AG04450 (cell line): ENCODE measurements at regions of chr3 and their contacts with region 1.

Region 1: DNA sequence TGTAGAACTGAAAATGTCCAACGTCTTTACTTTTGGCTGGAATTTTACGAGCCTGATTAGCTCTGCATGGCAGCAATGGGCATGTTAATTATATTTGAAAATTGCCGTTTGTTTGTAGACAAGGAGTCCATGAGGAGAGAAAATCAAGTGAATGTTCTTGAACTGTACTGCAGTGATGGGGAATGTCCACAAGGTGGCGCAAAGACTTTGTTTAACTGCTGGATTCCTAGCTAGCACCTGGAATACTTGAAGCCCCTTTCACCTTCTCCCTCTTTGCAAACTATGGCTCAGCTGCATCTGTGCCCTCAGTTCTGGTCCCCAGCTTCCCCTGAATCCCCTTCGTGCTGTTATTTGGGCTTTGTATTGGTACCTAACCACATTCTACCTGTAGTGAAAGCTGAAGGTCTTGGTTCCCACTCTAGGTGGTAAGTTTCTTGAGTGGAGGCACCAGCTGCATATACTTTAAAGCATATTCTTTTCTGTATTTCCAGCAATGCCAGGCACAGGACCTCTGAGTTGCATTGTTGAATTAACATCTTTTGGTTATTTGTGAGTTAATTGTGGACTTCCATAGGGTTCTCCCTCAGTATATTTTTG is 25.3 kb downstream of the EXOG start:
- DNase-seq: peak; percentile 49
- H3K4me3 ChIP-seq: no peak overlapping the region
- H3K27ac ChIP-seq: no peak overlapping the region
- H3K27me3 ChIP-seq: no peaks in the 10 kb centered on the region
- CTCF ChIP-seq: peak; percentile 88

Region 2: GRCh38 chr3:38127611-38128302 is 393.7 kb before region 1 on chr3:
- CTCF ChIA-PET with region 1: no interaction called
- POLR2A ChIA-PET with region 1: no interaction called
- DNase-seq: no peak
- H3K4me3 ChIP-seq: no peak overlapping the region
- H3K27ac ChIP-seq: no peak overlapping the region
- H3K27me3 ChIP-seq: no peaks in the 10 kb centered on the region
- CTCF ChIP-seq: no peak

Region 3: DNA sequence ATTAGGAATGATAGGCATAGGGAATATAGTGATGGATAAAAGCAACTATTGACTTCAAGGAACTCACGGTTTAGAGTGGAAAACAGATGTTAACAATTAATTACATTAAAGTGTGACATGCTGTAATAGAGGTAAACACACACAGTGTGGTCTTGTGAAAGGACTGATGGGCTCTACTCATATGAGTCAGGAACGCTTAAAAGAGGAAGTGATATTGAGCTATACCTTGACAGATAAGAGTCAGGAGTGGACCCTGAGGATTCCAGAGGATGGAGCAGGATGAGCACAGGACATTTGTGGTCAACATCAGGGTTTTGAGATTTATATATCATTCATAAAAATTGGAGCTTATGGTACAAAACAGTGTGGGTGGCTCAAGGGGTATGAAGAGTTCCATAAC is 14.4 kb before region 1 on chr3:
- CTCF ChIA-PET with region 1: interaction called, 100 read pairs
- POLR2A ChIA-PET with region 1: no interaction called
- DNase-seq: no peak
- H3K4me3 ChIP-seq: no peak overlapping the region
- H3K27ac ChIP-seq: no peak overlapping the region
- H3K27me3 ChIP-seq: no peaks in the 10 kb centered on the region
- CTCF ChIP-seq: no peak

Region 4: GRCh38 chr3:38651154-38651789 is 129.8 kb after region 1 on chr3:
- CTCF ChIA-PET with region 1: interaction called, 104 read pairs
- POLR2A ChIA-PET with region 1: no interaction called
- DNase-seq: peak; percentile 18
- H3K4me3 ChIP-seq: no peak overlapping the region
- H3K27ac ChIP-seq: no peak overlapping the region
- H3K27me3 ChIP-seq: peaks cover 30% of the 10 kb centered on the region
- CTCF ChIP-seq: peak; percentile 98

Region 5: DNA sequence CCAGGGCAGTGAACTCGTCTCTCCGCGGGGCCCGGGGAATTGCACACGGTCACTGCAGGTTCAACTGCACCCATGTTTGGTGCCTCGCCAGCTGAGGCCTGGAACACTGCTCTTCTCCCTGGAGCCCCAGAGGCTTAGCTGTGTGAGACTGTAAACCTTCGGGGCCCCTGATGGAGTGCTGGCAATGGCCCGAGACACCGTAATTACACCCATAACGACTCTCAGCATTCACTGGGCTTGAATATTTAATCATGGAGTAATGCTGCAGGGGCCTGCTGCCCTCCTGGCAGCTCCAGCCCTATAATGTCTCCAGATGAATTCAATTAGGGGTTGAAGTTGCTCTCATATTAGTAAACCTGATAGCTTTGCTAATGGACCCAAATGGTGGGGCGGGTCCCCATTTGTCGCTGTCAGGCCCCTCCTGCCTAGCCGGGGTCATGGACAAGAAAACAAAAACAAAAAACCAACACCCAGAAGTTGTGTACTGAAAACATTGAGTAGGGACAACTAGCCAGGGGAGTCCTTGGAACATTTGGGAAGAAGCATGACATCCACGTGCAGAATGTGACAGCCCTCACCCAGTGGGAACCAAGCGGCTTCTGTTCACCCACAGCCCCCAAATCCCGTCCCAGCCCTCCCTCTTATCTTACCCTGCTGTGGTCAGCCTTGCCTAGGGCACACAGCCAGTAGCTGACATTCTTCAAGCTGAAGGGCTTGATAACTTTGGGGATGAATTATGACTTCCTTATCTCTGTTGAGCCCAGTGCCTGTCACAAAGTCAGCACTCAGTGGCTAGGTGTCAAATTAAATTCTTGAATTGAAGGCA is 202.3 kb after region 1 on chr3:
- CTCF ChIA-PET with region 1: interaction called, 11 read pairs
- POLR2A ChIA-PET with region 1: no interaction called
- DNase-seq: no peak
- H3K4me3 ChIP-seq: no peak overlapping the region
- H3K27ac ChIP-seq: no peak overlapping the region
- H3K27me3 ChIP-seq: no peaks in the 10 kb centered on the region
- CTCF ChIP-seq: no peak

Region 6: DNA sequence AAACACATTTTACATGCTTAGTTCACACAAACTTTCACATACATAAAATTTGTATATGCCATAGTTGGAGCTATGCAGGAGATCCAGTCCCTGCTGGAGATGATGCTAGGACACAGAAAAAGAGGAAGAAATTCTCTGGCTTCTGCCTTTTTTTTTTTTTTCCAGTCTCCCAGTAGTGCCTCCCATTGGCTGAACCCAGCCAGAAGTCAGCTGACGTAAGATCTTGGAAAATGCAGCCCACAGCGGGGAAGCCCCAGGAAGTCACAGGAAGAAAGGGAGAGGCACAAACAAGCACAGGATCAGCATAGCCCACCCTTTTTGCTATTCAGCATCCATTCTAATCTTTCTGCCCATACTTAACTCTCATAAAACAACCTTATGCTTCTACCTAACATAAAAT is 491.8 kb after region 1 on chr3:
- CTCF ChIA-PET with region 1: interaction called, 14 read pairs
- POLR2A ChIA-PET with region 1: no interaction called
- DNase-seq: no peak
- H3K4me3 ChIP-seq: no peak overlapping the region
- H3K27ac ChIP-seq: no peak overlapping the region
- H3K27me3 ChIP-seq: no peaks in the 10 kb centered on the region
- CTCF ChIP-seq: no peak